A673 (cell line): ENCODE measurements at regions of chr9 and their contacts with region 1.

Region 1: DNA sequence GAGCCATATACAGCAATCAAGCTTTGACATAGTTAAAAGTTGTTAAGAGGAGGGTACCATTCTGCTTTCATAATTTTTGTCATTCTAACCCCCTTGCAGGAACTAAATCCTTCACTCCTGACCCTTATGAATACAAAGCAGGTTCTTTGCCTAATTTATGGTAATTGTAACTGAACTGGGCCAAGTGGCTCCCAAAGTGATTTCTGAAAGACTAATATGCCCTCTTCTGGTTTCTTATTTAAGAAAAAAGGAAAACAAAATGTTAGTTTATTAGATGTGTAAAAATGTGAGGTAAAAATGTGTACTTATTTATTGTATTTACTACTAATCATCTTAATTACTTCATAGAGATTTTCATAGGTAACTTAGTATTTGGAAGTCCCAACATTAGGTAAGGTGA is 268.5 kb downstream of the BNC2 start:
- DNase-seq: peak; percentile 6
- H3K4me3 ChIP-seq: no peak overlapping the region
- H3K27ac ChIP-seq: no peak overlapping the region
- H3K4me1 ChIP-seq: no peaks in the 10 kb centered on the region
- H3K27me3 ChIP-seq: no peaks in the 10 kb centered on the region
- CTCF ChIP-seq: no peak

Region 2: GRCh38 chr9:16191691-16192402 is 410.1 kb before region 1 on chr9:
- CTCF ChIA-PET with region 1: no interaction called
- POLR2A ChIA-PET with region 1: no interaction called
- intact Hi-C with region 1: loop called (anchors 5 kb)
- DNase-seq: peak; percentile 60
- H3K4me3 ChIP-seq: no peak overlapping the region
- H3K27ac ChIP-seq: no peak overlapping the region
- H3K4me1 ChIP-seq: no peaks in the 10 kb centered on the region
- H3K27me3 ChIP-seq: no peaks in the 10 kb centered on the region
- CTCF ChIP-seq: peak; percentile 68

Region 3: DNA sequence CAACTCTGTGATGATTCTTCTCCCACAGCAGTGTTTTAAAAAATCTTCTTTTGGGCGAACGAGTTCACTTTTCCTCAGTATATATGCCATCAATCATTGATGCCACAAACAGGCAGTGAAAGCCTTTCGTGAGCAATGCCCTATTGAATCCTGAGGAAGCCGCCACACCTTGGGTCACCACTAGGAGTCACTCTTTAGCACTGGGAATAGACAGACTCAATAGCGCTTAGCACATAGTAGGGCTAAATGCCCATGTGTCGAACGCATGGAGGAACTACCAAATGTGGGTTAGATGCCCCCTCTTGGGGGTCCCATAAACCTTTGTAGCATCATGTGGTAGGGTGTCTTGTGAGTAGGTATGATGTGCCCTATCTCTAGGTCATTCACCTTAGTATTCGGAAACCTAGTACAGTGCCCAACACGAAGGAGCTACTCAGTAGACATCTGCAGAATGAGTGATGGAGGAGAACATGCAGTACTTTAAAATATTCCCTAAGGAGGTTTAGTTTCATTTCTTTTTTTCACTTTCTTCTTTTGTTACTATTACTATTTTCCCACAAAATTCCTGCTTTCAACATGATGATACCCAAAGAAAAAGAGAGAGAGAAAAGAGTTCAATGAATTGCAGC is 335.2 kb before region 1 on chr9:
- CTCF ChIA-PET with region 1: no interaction called
- POLR2A ChIA-PET with region 1: no interaction called
- intact Hi-C with region 1: no loop called
- DNase-seq: no peak
- H3K4me3 ChIP-seq: no peak overlapping the region
- H3K27ac ChIP-seq: no peak overlapping the region
- H3K4me1 ChIP-seq: no peaks in the 10 kb centered on the region
- H3K27me3 ChIP-seq: no peaks in the 10 kb centered on the region
- CTCF ChIP-seq: peak; percentile 54